ENCODE measurements at regions of chr17 and their contacts with region 1.

Region 1: DNA sequence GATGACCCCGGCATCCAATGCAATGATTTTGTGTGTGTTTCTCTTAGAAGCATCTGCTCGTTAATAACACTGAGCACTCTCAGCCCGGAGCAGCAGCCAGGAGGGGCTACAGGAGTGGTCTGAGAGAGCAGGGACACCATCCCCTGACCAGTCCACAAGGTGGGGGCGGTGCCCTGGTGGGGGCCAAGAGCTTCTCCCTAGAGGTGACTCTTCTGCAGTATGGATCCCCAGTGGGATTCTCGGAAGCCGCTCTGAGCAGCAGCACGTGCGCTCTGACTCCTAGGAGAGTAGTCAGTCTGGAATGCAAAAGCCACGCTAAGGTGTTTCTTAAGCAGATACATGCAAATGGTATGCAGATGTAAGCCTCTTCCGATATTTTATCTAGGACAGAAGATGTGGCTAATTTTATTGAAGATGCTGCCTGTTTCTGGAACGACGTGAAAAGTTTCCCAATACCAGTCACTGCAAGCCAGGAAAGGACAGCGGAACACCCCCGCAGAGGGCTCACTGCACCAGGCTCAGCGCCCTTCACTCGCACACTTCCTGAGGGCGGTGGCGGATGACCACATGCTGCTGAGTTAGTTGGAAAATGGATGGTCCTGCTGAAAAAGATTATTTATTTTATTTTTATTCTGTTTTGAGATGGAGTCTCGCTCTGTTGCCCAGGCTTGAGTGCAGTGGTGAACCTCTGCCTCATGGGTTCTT is 10.2 kb downstream of the FADS6 start:
- DNase-seq: no peak
- ATAC-seq: no peak
- H3K4me3 ChIP-seq: no peak overlapping the region
- H3K27ac ChIP-seq: no peak overlapping the region
- H3K4me1 ChIP-seq: no peaks in the 10 kb centered on the region
- H3K27me3 ChIP-seq: no peaks in the 10 kb centered on the region; the same call in 1 of the 2 replicates
- CTCF ChIP-seq: no peak

Region 2: GRCh38 chr17:74647871-74648672 is 235.1 kb before region 1 on chr17:
- CTCF ChIA-PET with region 1: interaction called, 10 read pairs
- POLR2A ChIA-PET with region 1: no interaction called
- in situ Hi-C with region 1: no loop called
- intact Hi-C with region 1: no loop called
- DNase-seq: no peak
- ATAC-seq: no peak
- H3K4me3 ChIP-seq: no peak overlapping the region
- H3K27ac ChIP-seq: no peak overlapping the region
- H3K4me1 ChIP-seq: no peaks in the 10 kb centered on the region
- H3K27me3 ChIP-seq: peaks cover 49% of the 10 kb centered on the region
- CTCF ChIP-seq: no peak

Measured in Panc1 (cell line).